HEK293 (cell line): ENCODE measurements at regions of chr3 and their contacts with region 1.

Region 1: GRCh38 chr3:62795978-62796657 is 79.1 kb downstream of the CADPS start:
- H3K4me3 ChIP-seq: no peak overlapping the region
- H3K27ac ChIP-seq: no peak overlapping the region
- H3K4me1 ChIP-seq: no peaks in the 10 kb centered on the region
- CTCF ChIP-seq: no peak

Region 2: GRCh38 chr3:63022114-63022513 is 226.0 kb after region 1 on chr3:
- CTCF ChIA-PET with region 1: no interaction called
- POLR2A ChIA-PET with region 1: interaction called, 13 read pairs
- H3K4me3 ChIP-seq: no peak overlapping the region
- H3K27ac ChIP-seq: no peak overlapping the region
- H3K4me1 ChIP-seq: no peaks in the 10 kb centered on the region
- CTCF ChIP-seq: no peak